ENCODE measurements at regions of chr2 and their contacts with region 1.

Region 1: GRCh38 chr2:11124503-11125068 is 30.7 kb upstream of the SLC66A3 start:
- DNase-seq: peak; percentile 56
- ATAC-seq: peak; percentile 53 to 58

Region 2: GRCh38 chr2:10700078-10700803 is 424.3 kb before region 1 on chr2:
- intact Hi-C with region 1: no loop called
- DNase-seq: no peak
- ATAC-seq: no peak

Region 3: GRCh38 chr2:10832203-10832936 is 292.2 kb before region 1 on chr2:
- intact Hi-C with region 1: loop called (anchors 2 kb)
- DNase-seq: peak; percentile 84
- ATAC-seq: peak; percentile 86

Region 4: DNA sequence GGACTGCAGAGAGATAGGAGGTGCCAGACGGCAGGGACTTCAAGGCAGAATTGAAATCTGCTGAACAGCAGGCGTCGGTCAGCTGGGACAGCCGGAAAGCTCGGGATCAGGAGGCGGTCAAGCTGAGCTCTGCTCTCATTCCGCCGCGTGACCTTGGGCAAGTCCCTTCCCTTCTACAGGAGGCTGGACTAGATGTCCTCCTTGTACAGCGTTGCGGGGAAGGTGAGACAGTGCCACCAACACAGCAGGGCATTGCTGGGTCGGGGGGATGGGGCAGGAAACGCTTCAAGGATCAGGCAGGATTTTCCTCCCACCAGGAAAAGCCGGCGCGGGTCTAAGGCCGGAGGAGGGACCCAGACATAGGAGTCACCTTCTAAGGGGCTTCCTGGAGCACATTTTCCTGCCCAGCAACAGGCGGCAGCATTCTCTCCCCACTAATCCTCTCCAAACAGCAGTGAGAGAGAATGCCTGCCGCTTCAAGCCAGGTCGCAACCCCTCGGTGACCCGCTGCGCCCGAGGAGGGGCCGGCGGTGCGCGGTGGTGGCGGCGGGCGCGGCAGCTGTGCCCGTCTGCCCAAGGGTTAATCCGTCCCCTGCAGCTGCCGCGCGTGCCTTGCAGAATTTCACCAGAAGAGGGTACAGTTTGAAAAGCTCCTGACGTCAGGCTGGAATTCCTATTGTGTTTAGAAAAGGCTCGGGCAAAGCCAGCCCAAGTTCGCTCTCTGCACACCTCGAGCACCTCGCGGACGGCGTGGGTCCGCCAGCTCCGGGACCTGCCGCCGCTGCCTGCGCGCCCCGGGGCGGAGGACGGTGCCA is 213.1 kb before region 1 on chr2 and contains the start of gene KCNF1:
- intact Hi-C with region 1: loop called (anchors 10 kb)
- DNase-seq: no peak
- ATAC-seq: peak; percentile 2 to 6
- total RNA-seq, gene KCNF1: 0.24 to 0.97 TPM

Region 5: DNA sequence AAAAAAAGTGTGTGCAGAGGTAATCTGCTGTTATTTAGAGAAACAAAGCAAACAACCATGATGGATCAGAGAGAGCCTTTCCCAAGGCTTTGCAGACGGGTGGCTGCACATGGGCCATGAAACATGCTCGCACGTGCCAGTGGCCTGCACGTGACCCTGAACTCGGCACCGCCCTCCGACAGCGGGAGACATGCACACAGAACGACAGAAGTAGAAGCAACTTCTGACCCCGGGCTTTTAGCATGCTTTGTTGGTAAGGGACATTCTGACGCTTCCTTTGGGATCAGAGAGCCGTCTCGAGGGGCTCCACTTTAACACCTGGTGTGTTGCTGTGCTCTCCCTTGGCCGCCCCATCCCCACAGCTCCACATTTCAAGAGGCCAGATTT is 100.3 kb before region 1 on chr2:
- intact Hi-C with region 1: no loop called
- DNase-seq: no peak
- ATAC-seq: no peak

Region 6: GRCh38 chr2:11175293-11175795 is 50.8 kb after region 1 on chr2:
- intact Hi-C with region 1: no loop called
- DNase-seq: no peak
- ATAC-seq: peak in 1 of 2 donors; percentile 52